ENCODE measurements at regions of chr18 and their contacts with region 1.

Region 1: GRCh38 chr18:45879681-45880655 is 54.5 kb downstream of the SIGLEC15 start:
- DNase-seq: peak; percentile 76
- ATAC-seq: peak; percentile 91
- H3K4me3 Mint-ChIP-seq: no peak overlapping the region
- H3K27ac Mint-ChIP-seq: peak overlapping the region; percentile 55
- H3K4me1 Mint-ChIP-seq: peaks cover 14% of the 10 kb centered on the region
- H3K27me3 Mint-ChIP-seq: no peaks in the 10 kb centered on the region

Region 2: DNA sequence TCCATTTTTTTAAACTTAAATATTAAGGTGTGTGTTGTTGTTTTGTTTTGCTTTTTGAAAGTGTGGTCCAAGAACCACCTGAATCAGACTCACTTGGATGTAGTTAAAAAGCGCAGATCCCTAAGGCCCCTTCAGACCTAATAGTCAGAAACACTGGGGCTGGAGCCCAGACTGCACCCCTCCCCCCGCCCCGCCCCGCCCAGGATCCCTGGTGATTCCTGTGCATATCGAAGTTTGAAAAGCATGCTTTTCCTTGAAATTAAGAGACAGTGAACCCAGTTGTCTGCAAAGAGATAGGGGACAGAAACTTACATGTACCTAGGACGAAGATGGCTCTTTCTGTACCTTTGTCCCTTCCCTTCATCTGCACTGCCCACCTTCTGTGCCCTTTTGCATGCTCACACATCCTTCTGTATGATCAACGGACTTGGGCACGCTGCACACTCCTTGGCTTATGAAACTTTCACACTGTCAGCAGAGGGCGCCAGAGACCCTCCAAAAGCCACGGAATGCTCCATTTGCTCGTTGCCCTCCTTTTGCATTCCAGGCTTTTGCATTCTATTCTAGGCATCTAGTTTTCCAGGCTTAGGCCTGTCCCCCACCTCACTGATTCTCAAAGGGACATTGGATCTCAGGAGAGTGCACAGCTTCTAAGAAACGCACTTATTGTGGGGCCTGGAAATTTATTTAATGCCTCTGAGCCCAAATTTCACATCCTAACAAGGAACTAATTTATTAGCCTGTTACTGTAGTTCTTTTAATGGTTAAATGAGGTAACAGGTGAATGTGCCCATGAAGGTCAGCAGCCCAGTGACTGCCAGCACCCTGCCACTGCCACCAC is 188.8 kb before region 1 on chr18:
- CTCF ChIA-PET with region 1: interaction called, 59 read pairs
- POLR2A ChIA-PET with region 1: interaction called, 5 read pairs
- DNase-seq: peak; percentile 85
- ATAC-seq: no peak
- H3K4me3 Mint-ChIP-seq: no peak overlapping the region
- H3K27ac Mint-ChIP-seq: no peak overlapping the region
- H3K4me1 Mint-ChIP-seq: peaks cover 49% of the 10 kb centered on the region
- H3K27me3 Mint-ChIP-seq: peaks cover 13% of the 10 kb centered on the region

Region 3: GRCh38 chr18:45730832-45731575 is 149.0 kb before region 1 on chr18:
- CTCF ChIA-PET with region 1: interaction called, 95 read pairs
- POLR2A ChIA-PET with region 1: no interaction called
- DNase-seq: no peak
- ATAC-seq: no peak
- H3K4me3 Mint-ChIP-seq: no peak overlapping the region
- H3K27ac Mint-ChIP-seq: no peak overlapping the region
- H3K4me1 Mint-ChIP-seq: no peaks in the 10 kb centered on the region
- H3K27me3 Mint-ChIP-seq: no peaks in the 10 kb centered on the region

Region 4: GRCh38 chr18:45850021-45850420 is 29.9 kb before region 1 on chr18:
- CTCF ChIA-PET with region 1: interaction called, 15 read pairs
- POLR2A ChIA-PET with region 1: no interaction called
- DNase-seq: no peak
- ATAC-seq: no peak
- H3K4me3 Mint-ChIP-seq: no peak overlapping the region
- H3K27ac Mint-ChIP-seq: no peak overlapping the region
- H3K4me1 Mint-ChIP-seq: peaks cover 3% of the 10 kb centered on the region
- H3K27me3 Mint-ChIP-seq: no peaks in the 10 kb centered on the region

Region 5: DNA sequence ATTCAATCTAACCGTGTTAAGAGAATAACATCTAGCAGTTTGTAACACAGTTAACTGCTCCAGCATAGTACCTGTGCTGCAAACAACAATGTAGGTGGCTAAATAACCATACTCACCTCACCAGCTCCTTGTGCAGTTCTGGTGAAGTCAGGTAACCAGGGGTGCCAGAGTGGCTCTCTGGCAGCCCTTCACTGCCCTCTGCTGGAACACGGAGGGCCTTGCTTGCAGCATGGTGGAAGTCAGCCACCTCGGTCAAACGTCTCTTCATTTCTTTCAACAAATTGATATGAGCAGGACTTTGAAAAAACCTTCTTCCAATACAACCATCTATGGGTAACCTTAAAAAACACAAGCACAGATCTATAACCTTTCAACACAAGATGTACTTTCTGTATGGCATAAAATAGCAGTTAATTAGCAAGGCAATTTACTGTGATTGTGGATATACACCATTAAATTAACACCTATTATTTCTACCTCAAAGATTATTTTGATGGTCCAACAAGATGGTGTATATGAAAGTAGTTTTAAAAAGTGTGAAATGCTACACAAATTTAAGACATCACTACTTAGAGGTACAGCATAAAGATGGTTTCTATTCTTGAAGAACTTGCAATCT is 30.5 kb after region 1 on chr18:
- CTCF ChIA-PET with region 1: interaction called, 10 read pairs
- POLR2A ChIA-PET with region 1: no interaction called
- DNase-seq: peak; percentile 76
- ATAC-seq: peak; percentile 87
- H3K4me3 Mint-ChIP-seq: no peak overlapping the region
- H3K27ac Mint-ChIP-seq: no peak overlapping the region
- H3K4me1 Mint-ChIP-seq: no peaks in the 10 kb centered on the region
- H3K27me3 Mint-ChIP-seq: no peaks in the 10 kb centered on the region

Region 6: GRCh38 chr18:45984546-45985235 is 104.7 kb after region 1 on chr18:
- CTCF ChIA-PET with region 1: no interaction called
- POLR2A ChIA-PET with region 1: no interaction called
- DNase-seq: no peak
- ATAC-seq: no peak
- H3K4me3 Mint-ChIP-seq: no peak overlapping the region
- H3K27ac Mint-ChIP-seq: no peak overlapping the region
- H3K4me1 Mint-ChIP-seq: no peaks in the 10 kb centered on the region
- H3K27me3 Mint-ChIP-seq: no peaks in the 10 kb centered on the region

Region 7: DNA sequence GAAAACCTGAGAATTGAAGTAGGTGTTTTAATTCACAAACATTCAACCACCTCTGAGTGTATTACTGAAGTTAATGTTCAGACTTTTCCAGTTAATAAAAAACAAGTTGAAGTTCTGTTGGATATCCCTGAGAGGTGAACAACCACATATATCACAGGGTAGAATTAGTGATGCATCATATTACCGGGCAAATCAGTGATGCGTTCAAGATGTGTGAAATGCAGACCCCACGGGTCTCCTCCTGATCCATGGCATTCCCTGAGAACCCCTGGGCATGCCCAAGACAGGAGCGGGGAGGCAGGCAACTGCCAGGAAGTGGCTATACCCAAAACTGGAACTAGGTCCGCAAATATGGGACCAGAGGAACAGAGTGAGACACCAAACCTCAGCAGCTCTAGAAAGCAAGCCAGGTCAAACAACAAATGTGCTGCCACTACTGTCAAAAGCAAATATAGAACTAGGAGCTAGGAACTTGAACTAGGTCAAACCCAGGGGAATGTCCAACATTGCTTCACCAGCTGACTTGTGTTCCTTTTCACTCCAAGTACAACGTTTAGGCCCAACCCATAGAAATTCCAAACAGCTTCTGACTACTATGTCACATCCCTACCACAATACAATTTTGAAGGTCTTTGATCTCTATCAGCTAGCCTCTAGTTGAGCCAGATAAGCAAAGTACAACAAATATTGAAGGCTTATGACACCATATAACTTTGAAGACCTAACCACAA is 171.9 kb after region 1 on chr18:
- CTCF ChIA-PET with region 1: no interaction called
- POLR2A ChIA-PET with region 1: no interaction called
- DNase-seq: no peak
- ATAC-seq: no peak
- H3K4me3 Mint-ChIP-seq: no peak overlapping the region
- H3K27ac Mint-ChIP-seq: no peak overlapping the region
- H3K4me1 Mint-ChIP-seq: peaks cover 31% of the 10 kb centered on the region
- H3K27me3 Mint-ChIP-seq: no peaks in the 10 kb centered on the region

Region 8: DNA sequence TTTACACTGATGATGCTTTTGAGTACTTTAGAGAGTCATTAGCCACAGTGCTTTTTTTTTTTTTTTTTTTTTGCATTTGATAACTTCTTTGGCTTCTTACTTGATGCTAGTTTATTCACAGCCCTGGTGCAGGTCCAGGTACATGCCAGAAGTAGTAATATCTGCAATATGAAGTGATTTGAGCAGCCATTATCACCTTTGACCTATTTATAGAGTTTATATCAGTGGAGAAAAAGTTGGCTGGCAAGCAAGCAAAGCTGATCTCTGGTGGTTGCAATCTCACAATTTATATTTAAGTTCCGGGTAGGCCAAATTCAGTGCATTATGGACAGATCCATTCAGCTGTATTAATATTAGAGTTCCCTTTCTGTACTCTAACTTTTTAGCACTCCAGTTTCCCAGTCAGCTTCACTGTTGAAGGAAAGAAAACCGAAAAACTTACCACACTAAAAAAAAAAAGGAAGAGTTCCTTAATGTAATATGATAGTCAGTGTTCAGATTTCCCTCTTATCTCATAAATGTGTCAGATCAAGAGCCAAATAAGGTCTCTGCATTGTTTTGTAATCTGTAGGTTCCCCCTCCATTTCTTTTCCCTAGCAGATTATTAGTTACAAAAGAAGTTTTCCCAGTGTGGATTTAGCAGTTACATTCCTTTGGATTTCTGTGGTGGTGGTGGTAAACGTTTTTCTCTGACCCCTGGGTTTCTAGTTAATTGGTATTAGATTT is 302.8 kb after region 1 on chr18:
- CTCF ChIA-PET with region 1: no interaction called
- POLR2A ChIA-PET with region 1: no interaction called
- DNase-seq: no peak
- ATAC-seq: no peak
- H3K4me3 Mint-ChIP-seq: no peak overlapping the region
- H3K27ac Mint-ChIP-seq: no peak overlapping the region
- H3K4me1 Mint-ChIP-seq: peaks cover 56% of the 10 kb centered on the region
- H3K27me3 Mint-ChIP-seq: no peaks in the 10 kb centered on the region